Tibial artery (tissue), 4 donors: ENCODE measurements at regions of chrX and their contacts with region 1.

Region 1: GRCh38 chrX:16826207-16826606 is 39.9 kb downstream of the TXLNG start:
- DNase-seq: no peak
- H3K4me3 ChIP-seq: no peak overlapping the region
- H3K27ac ChIP-seq: no peak overlapping the region
- H3K4me1 ChIP-seq: peaks cover 0 to 23% (median 0%) of the 10 kb centered on the region in 4 donors
- H3K27me3 ChIP-seq: no peaks in the 10 kb centered on the region
- CTCF ChIP-seq: peak; percentile 42 to 49

Region 2: DNA sequence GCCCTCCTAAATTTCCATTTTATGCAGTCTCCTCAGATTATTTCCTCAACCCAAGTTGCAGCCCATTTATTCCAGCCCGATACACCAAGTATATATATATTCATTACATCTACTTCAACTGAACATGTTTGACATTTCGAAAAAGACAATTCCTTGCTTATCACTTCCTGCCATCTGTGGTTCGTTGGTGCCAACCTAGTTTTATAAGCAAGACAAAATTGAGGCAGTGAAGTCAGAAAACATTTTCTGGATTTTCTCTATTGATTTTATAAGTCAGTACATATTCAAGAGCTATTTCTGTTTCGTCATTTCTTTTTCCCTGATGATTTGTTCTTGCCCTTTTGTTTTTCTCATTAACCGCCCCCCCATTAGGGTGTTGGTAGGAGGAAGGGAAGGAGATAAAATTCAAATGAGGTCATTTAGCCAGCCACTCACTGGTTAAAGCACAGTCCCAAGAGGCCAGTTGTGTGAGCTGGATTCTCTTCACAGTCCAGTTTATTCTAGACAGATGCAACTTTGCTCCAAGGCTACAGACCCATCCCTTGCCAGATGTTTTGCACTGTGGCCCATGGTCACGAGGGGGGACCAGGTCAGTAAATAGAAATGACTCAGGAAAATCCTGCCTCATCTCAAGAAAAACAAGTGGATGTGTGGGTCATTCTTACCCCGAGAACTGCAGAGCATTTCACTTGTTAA is 1421.7 kb before region 1 on chrX:
- intact Hi-C with region 1: no loop called
- DNase-seq: peak; percentile 41 to 67
- H3K4me3 ChIP-seq: no peak overlapping the region
- H3K27ac ChIP-seq: no peak overlapping the region
- H3K4me1 ChIP-seq: no peaks in the 10 kb centered on the region
- H3K27me3 ChIP-seq: no peaks in the 10 kb centered on the region
- CTCF ChIP-seq: no peak

Region 3: GRCh38 chrX:16870095-16870860 is 44.1 kb after region 1 on chrX and contains the start of gene RBBP7:
- intact Hi-C with region 1: loop called (anchors 10 kb)
- DNase-seq: peak; percentile 88 to 95
- H3K4me3 ChIP-seq: peak within 1 kb of the TSS; percentile 75 to 80
- H3K27ac ChIP-seq: peak within 1 kb of the TSS; percentile 86 to 90
- H3K4me1 ChIP-seq: peaks cover 0 to 47% (median 15%) of the 10 kb centered on the region in 4 donors
- H3K27me3 ChIP-seq: no peaks in the 10 kb centered on the region
- CTCF ChIP-seq: no peak

Region 4: DNA sequence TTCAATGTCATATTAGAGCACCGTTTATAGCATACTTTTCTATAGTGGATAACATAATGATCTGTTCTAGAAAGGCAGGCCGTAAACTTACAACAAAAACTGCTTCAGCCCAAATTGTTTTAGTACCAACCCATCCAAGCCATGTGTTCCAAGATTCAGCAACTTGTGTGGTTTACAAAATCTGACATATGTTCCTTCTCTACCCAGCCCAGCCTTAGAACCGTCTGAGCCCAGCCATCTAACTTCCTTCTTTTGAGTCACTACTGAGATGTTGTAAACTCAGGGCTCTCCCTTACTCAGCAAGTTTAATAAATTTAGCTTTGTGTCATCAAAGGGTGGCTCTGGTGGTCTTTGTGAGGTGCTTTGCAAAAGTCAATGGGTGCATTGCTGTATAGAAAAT is 87.9 kb after region 1 on chrX:
- intact Hi-C with region 1: no loop called
- DNase-seq: peak in 1 of 2 donors; percentile 23
- H3K4me3 ChIP-seq: no peak overlapping the region
- H3K27ac ChIP-seq: no peak overlapping the region
- H3K4me1 ChIP-seq: no peaks in the 10 kb centered on the region
- H3K27me3 ChIP-seq: no peaks in the 10 kb centered on the region
- CTCF ChIP-seq: no peak

Region 5: GRCh38 chrX:17046478-17047097 is 220.4 kb after region 1 on chrX:
- intact Hi-C with region 1: loop called (anchors 5 kb)
- DNase-seq: peak; percentile 52 to 64
- H3K4me3 ChIP-seq: no peak overlapping the region
- H3K27ac ChIP-seq: no peak overlapping the region
- H3K4me1 ChIP-seq: no peaks in the 10 kb centered on the region
- H3K27me3 ChIP-seq: no peaks in the 10 kb centered on the region
- CTCF ChIP-seq: peak; percentile 59 to 64